ENCODE measurements at regions of chr12 and their contacts with region 1.

Region 1: GRCh38 chr12:25320123-25321006 is 69.6 kb upstream of the KRAS start:
- DNase-seq: peak; percentile 82
- ATAC-seq: peak; percentile 84
- H3K4me3 ChIP-seq: no peak overlapping the region; the same call in 1 of the 2 replicates
- H3K27ac ChIP-seq: peak overlapping the region; percentile 54
- H3K4me1 ChIP-seq: peaks cover 40% of the 10 kb centered on the region
- H3K27me3 ChIP-seq: no peaks in the 10 kb centered on the region
- CTCF ChIP-seq: no peak
- EP300 ChIP-seq: peak; percentile 28 to 85
- POLR2A ChIP-seq: no peak
- RAD21 ChIP-seq: no peak

Region 2: DNA sequence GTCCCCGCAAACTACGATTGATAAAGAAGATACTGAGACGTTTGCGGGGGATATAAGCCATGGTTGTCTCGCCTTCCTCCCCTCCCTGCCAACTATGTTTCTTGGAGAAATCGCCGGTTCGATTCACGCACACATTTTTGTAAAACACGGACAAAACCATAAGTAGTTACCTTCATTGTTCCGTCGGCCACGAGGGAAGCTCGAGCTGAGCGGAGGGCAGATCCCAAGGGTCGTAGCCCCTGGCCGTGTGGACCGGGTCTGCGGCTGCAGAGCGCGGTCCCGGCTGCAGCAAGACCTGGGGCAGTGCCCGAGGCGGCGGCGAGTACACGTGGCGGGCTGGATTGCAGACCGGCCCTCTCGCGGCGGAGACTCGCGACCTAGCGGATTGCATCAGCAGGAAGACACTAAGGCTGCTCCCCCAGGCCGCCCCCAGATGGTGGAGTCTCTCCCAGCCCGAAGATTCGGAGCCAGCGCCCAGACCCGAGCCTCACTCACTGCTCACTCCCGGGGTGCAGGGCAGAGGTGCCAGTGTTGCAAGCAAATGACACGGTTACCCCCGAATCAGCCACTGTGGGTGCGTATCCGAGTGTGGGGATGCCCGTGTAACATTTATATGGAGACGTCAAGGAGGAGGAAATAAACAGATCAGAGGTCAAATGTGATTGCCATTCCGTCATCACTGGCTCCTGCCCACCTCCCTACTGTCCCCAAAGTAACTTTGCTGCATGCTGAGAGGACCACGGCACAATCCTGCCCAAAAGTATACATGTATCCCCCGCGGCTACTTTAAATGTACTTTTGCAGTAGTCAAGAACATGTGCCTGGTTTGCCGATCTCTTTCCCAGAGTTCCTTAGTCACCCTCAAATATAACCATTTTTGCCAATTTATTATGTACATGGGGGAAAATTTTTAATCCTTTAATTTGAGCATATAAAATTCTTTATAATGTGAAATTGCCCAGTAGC is 371.3 kb before region 1 on chr12 and contains the start of gene BCAT1:
- CTCF ChIA-PET with region 1: no interaction called
- POLR2A ChIA-PET with region 1: no interaction called
- RAD21 ChIA-PET with region 1: no interaction called
- SMC1A ChIA-PET with region 1: no interaction called
- in situ Hi-C with region 1: no loop called
- intact Hi-C with region 1: loop called (anchors 2 kb)
- DNase-seq: no peak
- ATAC-seq: peak; percentile 41
- H3K4me3 ChIP-seq: peak within 1 kb of the TSS; percentile 85
- H3K27ac ChIP-seq: peak within 1 kb of the TSS; percentile 97
- H3K4me1 ChIP-seq: peaks cover 52% of the 10 kb centered on the region
- H3K27me3 ChIP-seq: no peaks in the 10 kb centered on the region
- CTCF ChIP-seq: peak in 2 of 3 experiments; percentile 7 to 11; a peak in 1 of 6 replicates
- EP300 ChIP-seq: no peak
- POLR2A ChIP-seq: peak; percentile 88
- RAD21 ChIP-seq: no peak
- polyA plus RNA-seq, gene BCAT1: 26.2 to 38.1 TPM

Region 3: DNA sequence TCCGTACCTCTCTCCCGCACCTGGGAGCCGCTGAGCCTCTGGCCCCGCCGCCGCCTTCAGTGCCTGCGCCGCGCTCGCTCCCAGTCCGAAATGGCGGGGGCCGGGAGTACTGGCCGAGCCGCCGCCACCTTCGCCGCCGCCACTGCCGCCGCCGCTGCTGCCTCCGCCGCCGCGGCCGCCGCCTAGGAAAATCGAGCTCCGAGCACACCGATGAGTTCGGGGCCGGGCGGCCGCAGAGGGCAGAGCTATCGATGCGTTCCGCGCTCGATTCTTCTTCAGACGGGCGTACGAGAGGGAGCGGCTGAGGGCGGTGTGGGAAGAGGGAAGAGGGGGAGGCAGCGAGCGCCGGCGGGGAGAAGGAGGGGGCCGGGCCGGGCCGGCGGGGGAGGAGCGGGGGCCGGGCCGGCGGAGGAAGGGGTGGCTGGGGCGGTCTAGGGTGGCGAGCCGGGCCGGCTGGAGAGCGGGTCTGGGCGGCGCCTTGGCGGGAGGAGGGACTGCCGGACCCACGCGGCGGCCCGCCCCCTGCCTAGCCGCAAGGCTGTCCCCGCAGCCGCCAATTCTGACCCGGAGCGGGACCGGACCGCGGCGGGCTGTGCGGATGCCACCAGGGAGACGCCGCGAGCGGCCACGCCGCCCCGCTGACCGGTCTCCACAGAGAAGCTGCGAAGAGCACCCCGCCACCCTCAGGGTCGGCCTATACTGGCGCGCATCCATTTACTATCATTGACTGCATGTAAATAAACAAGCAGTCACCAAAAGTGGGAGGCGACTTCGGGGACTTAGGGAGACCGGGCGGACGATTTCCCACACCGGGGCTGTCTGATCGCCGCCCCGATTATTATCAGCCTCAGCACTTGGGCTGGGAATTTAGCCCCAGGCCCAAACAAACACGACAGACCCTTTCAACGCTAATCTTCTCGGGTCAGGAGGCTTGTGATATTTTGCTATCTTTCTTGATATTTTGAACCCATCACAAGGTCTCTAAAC is 69.3 kb before region 1 on chr12 and contains the start of gene KRAS:
- CTCF ChIA-PET with region 1: no interaction called
- POLR2A ChIA-PET with region 1: interaction called, 6 read pairs
- RAD21 ChIA-PET with region 1: interaction called, 5 read pairs
- SMC1A ChIA-PET with region 1: interaction called, 5 read pairs
- in situ Hi-C with region 1: no loop called
- intact Hi-C with region 1: loop called (anchors 2 kb)
- DNase-seq: peak; percentile 69
- ATAC-seq: peak; percentile 92
- H3K4me3 ChIP-seq: peak within 1 kb of the TSS; percentile 98
- H3K27ac ChIP-seq: peak within 1 kb of the TSS; percentile 70
- H3K4me1 ChIP-seq: peaks cover 10% of the 10 kb centered on the region
- H3K27me3 ChIP-seq: no peaks in the 10 kb centered on the region
- CTCF ChIP-seq: no peak
- EP300 ChIP-seq: no peak
- POLR2A ChIP-seq: peak; percentile 84
- RAD21 ChIP-seq: no peak
- polyA plus RNA-seq, gene KRAS: 3.1 to 6.1 TPM

Region 4: GRCh38 chr12:25301803-25302202 is 18.6 kb before region 1 on chr12:
- CTCF ChIA-PET with region 1: interaction called, 5 read pairs
- POLR2A ChIA-PET with region 1: no interaction called
- RAD21 ChIA-PET with region 1: interaction called, 3 read pairs
- SMC1A ChIA-PET with region 1: interaction called, 12 read pairs
- in situ Hi-C with region 1: no loop called
- intact Hi-C with region 1: no loop called
- DNase-seq: no peak
- ATAC-seq: no peak
- H3K4me3 ChIP-seq: no peak overlapping the region
- H3K27ac ChIP-seq: no peak overlapping the region
- H3K4me1 ChIP-seq: no peaks in the 10 kb centered on the region
- H3K27me3 ChIP-seq: no peaks in the 10 kb centered on the region
- CTCF ChIP-seq: no peak
- EP300 ChIP-seq: no peak
- POLR2A ChIP-seq: no peak
- RAD21 ChIP-seq: no peak

Region 5: GRCh38 chr12:25386831-25387731 is 66.7 kb after region 1 on chr12:
- CTCF ChIA-PET with region 1: interaction called, 5 read pairs
- POLR2A ChIA-PET with region 1: no interaction called
- RAD21 ChIA-PET with region 1: interaction called, 12 read pairs
- SMC1A ChIA-PET with region 1: no interaction called
- in situ Hi-C with region 1: no loop called
- intact Hi-C with region 1: no loop called
- DNase-seq: no peak
- ATAC-seq: peak; percentile 65
- H3K4me3 ChIP-seq: peak overlapping the region; percentile 99; the same call in 1 of the 2 replicates
- H3K27ac ChIP-seq: peak overlapping the region; percentile 95
- H3K4me1 ChIP-seq: peaks cover 21% of the 10 kb centered on the region
- H3K27me3 ChIP-seq: no peaks in the 10 kb centered on the region
- CTCF ChIP-seq: peak; percentile 76 to 92 (median 78)
- EP300 ChIP-seq: no peak
- POLR2A ChIP-seq: no peak
- RAD21 ChIP-seq: peak; percentile 96

Region 6: GRCh38 chr12:25447046-25447445 is 126.7 kb after region 1 on chr12:
- CTCF ChIA-PET with region 1: no interaction called
- POLR2A ChIA-PET with region 1: no interaction called
- RAD21 ChIA-PET with region 1: no interaction called
- SMC1A ChIA-PET with region 1: no interaction called
- in situ Hi-C with region 1: no loop called
- intact Hi-C with region 1: no loop called
- DNase-seq: no peak
- ATAC-seq: no peak
- H3K4me3 ChIP-seq: no peak overlapping the region
- H3K27ac ChIP-seq: no peak overlapping the region
- H3K4me1 ChIP-seq: no peaks in the 10 kb centered on the region
- H3K27me3 ChIP-seq: no peaks in the 10 kb centered on the region
- CTCF ChIP-seq: no peak
- EP300 ChIP-seq: no peak
- POLR2A ChIP-seq: no peak
- RAD21 ChIP-seq: no peak

Measured in GM12878 (cell line).